ENCODE measurements at regions of chr5 and their contacts with region 1.

Region 1: GRCh38 chr5:56270568-56271392 is 37.6 kb upstream of the ANKRD55 start:
- DNase-seq: peak; percentile 54 to 97 (median 80)

Region 2: GRCh38 chr5:56838409-56839039 is 567.7 kb after region 1 on chr5:
- intact Hi-C with region 1: loop called (anchors 1 kb)
- DNase-seq: no peak